A673 (cell line): ENCODE measurements at regions of chr18 and their contacts with region 1.

Region 1: GRCh38 chr18:42298759-42299675 is 344.0 kb downstream of the PIK3C3 start:
- DNase-seq: peak; percentile 87
- H3K4me3 ChIP-seq: no peak overlapping the region
- H3K27ac ChIP-seq: no peak overlapping the region
- H3K4me1 ChIP-seq: peaks cover 4% of the 10 kb centered on the region
- H3K27me3 ChIP-seq: no peaks in the 10 kb centered on the region
- CTCF ChIP-seq: peak; percentile 93

Region 2: GRCh38 chr18:42459873-42460272 is 160.9 kb after region 1 on chr18:
- CTCF ChIA-PET with region 1: no interaction called
- POLR2A ChIA-PET with region 1: no interaction called
- intact Hi-C with region 1: no loop called
- DNase-seq: no peak
- H3K4me3 ChIP-seq: no peak overlapping the region
- H3K27ac ChIP-seq: no peak overlapping the region
- H3K4me1 ChIP-seq: no peaks in the 10 kb centered on the region
- H3K27me3 ChIP-seq: no peaks in the 10 kb centered on the region
- CTCF ChIP-seq: no peak

Region 3: GRCh38 chr18:42872838-42873237 is 573.8 kb after region 1 on chr18:
- CTCF ChIA-PET with region 1: no interaction called
- POLR2A ChIA-PET with region 1: no interaction called
- intact Hi-C with region 1: loop called (anchors 10 kb)
- DNase-seq: no peak
- H3K4me3 ChIP-seq: no peak overlapping the region
- H3K27ac ChIP-seq: no peak overlapping the region
- H3K4me1 ChIP-seq: no peaks in the 10 kb centered on the region
- H3K27me3 ChIP-seq: no peaks in the 10 kb centered on the region
- CTCF ChIP-seq: no peak

Region 4: GRCh38 chr18:43277164-43277600 is 978.2 kb after region 1 on chr18 and contains the start of gene SYT4:
- CTCF ChIA-PET with region 1: no interaction called
- POLR2A ChIA-PET with region 1: no interaction called
- intact Hi-C with region 1: loop called (anchors 5 kb)
- DNase-seq: peak; percentile 72
- H3K4me3 ChIP-seq: no peak within 1 kb of the TSS
- H3K27ac ChIP-seq: no peak within 1 kb of the TSS
- H3K4me1 ChIP-seq: no peaks in the 10 kb centered on the region
- H3K27me3 ChIP-seq: no peaks in the 10 kb centered on the region
- CTCF ChIP-seq: no peak
- total RNA-seq, gene SYT4: 2.3 TPM in 2 replicates

Region 5: GRCh38 chr18:43396266-43396665 is 1097.2 kb after region 1 on chr18:
- CTCF ChIA-PET with region 1: no interaction called
- POLR2A ChIA-PET with region 1: no interaction called
- intact Hi-C with region 1: loop called (anchors 10 kb)
- DNase-seq: peak; percentile 45
- H3K4me3 ChIP-seq: no peak overlapping the region
- H3K27ac ChIP-seq: no peak overlapping the region
- H3K4me1 ChIP-seq: no peaks in the 10 kb centered on the region
- H3K27me3 ChIP-seq: no peaks in the 10 kb centered on the region
- CTCF ChIP-seq: peak; percentile 67